ENCODE measurements at regions of chr1 and their contacts with region 1.

Region 1: DNA sequence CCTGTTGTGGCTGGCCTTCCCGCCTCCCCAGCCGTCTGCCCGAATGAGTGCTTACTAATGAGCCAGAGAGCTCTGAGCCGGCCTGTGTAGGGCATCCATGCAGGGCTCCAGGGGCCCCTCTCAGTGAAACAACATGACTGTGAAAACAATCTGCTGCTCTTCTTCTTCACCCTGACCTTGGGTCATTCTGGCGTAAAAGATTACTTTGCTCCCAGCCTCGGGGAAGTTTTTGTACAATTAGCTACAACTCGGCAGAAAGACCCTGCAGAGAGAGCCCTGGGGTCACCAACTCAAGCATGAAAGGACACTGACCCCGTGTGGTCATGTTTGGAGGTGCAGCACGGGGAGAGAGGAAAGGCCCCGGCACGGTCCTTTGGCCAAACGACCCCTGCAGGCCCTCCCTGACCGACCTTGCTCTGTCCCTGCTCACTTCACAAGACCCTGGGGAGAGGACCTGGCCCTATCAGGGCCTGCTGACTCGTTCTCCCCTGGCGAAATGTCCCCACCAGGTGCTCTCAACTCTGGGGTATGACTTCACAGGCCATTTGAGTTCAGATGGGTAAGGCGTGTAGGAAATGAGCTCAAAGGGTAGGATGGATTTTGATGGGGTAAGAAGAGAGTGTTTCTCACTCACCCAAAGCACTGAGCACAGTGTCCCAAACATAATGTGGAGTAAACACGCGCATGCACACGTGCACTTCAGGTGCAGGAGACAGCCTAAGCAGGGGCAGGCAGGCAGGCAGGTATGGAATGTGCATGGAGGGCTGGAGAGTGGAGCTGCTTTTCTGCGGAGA is 22.9 kb upstream of the FAM20B start:
- DNase-seq: peak; percentile 82
- ATAC-seq: peak; percentile 81
- H3K4me3 Mint-ChIP-seq: no peak overlapping the region
- H3K27ac Mint-ChIP-seq: peak overlapping the region; percentile 49
- H3K4me1 Mint-ChIP-seq: peaks cover 13% of the 10 kb centered on the region
- H3K27me3 Mint-ChIP-seq: no peaks in the 10 kb centered on the region

Region 2: DNA sequence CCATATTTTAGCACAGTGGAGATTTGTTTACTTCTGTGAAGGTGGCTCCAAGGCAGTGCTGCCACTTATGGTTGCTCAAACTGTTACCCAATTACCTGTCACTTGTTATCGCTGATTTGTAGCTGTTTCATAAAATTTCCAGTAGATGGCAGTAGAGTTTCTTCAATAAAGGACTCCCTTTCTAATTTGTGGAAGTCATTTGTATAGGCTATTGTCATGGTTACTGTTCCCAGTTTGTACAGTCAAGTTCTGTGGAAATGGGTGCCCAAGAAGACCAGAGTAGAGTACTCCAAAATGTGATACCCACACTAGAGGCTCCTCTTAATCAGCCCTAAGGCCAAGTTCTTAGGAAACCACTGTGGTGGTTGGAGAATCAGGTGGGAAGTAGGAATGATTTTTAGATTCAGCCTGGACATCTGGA is 692.1 kb before region 1 on chr1:
- CTCF ChIA-PET with region 1: interaction called, 3 read pairs
- POLR2A ChIA-PET with region 1: no interaction called
- intact Hi-C with region 1: loop called in 1 of 2 experiments (anchors 10 kb)
- DNase-seq: no peak
- ATAC-seq: peak; percentile 49
- H3K4me3 Mint-ChIP-seq: no peak overlapping the region
- H3K27ac Mint-ChIP-seq: no peak overlapping the region
- H3K4me1 Mint-ChIP-seq: no peaks in the 10 kb centered on the region
- H3K27me3 Mint-ChIP-seq: peaks cover 8% of the 10 kb centered on the region

Region 3: DNA sequence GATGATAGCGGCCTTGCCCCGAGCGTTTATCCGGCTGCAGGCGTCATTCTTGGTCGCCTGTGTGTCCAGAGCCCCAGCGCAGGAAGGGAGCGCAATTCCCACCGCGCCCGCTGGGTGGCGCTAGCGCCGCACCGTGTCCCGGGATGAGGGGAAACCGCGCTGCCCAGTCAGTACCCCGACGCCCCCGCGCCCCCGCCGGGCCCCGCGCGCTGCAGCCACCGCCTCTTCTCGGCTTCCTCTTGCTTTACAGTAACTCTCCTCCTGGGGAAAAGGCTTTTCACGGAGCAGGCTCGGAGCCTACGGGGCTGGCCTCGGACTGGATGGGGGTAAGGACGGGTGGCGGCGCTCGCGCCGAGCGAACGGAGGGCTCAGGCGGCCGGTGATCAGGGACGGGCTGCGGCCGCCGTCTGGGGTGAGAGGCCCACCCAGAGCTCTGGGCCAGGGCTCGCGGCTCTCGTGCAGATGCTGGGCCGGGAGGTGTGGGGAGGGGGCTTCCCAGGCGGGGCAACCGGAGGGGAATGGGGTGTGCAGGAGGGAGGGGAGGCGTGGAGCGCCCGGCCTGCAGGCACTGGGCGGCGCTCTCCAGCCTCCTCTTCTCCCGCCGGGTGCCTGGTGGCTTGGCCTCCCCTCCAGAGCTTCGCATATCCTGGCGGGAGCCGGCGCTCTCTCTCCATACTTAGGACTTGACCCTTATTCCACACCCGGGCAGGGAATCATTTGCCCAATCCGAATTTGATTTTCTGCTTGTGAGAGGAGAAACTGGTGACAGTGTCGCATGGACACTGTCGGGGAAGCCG is 460.0 kb before region 1 on chr1:
- CTCF ChIA-PET with region 1: interaction called, 6 read pairs
- POLR2A ChIA-PET with region 1: no interaction called
- intact Hi-C with region 1: loop called (anchors 1 kb)
- DNase-seq: peak; percentile 93
- ATAC-seq: peak; percentile 88
- H3K4me3 Mint-ChIP-seq: peak overlapping the region; percentile 84
- H3K27ac Mint-ChIP-seq: peak overlapping the region; percentile 85
- H3K4me1 Mint-ChIP-seq: peaks cover 2% of the 10 kb centered on the region
- H3K27me3 Mint-ChIP-seq: no peaks in the 10 kb centered on the region

Region 4: GRCh38 chr1:178774263-178774662 is 228.5 kb before region 1 on chr1:
- CTCF ChIA-PET with region 1: interaction called, 60 read pairs
- POLR2A ChIA-PET with region 1: no interaction called
- intact Hi-C with region 1: loop called (anchors 1 kb)
- DNase-seq: no peak
- ATAC-seq: no peak
- H3K4me3 Mint-ChIP-seq: no peak overlapping the region
- H3K27ac Mint-ChIP-seq: no peak overlapping the region
- H3K4me1 Mint-ChIP-seq: no peaks in the 10 kb centered on the region
- H3K27me3 Mint-ChIP-seq: no peaks in the 10 kb centered on the region

Region 5: GRCh38 chr1:179025125-179025974 is 22.6 kb after region 1 on chr1 and contains the start of gene FAM20B:
- CTCF ChIA-PET with region 1: interaction called, 11 read pairs
- POLR2A ChIA-PET with region 1: no interaction called
- intact Hi-C with region 1: no loop called
- DNase-seq: peak; percentile 93
- ATAC-seq: peak; percentile 85
- H3K4me3 Mint-ChIP-seq: peak within 1 kb of the TSS; percentile 87
- H3K27ac Mint-ChIP-seq: peak within 1 kb of the TSS; percentile 87
- H3K4me1 Mint-ChIP-seq: peaks cover 39% of the 10 kb centered on the region
- H3K27me3 Mint-ChIP-seq: no peaks in the 10 kb centered on the region
- total RNA-seq, gene FAM20B: 21.7 to 35.8 TPM

Measured in activated CD4-positive, alpha-beta T cell treated with anti-CD3 and anti-CD28 coated beads for 36 hours (primary cell).